Dorsolateral prefrontal cortex (tissue), 120 donors: ENCODE measurements at regions of chr6 and their contacts with region 1.

Region 1: GRCh38 chr6:98839781-98840361 is 5.5 kb downstream of the POU3F2 start:
- DNase-seq: peak in 7 of 10 donors; percentile 38 to 69 (median 56)
- H3K4me3 ChIP-seq: peak overlapping the region in 58 of 59 donors; percentile 27 to 92 (median 78)
- H3K27ac ChIP-seq: peak overlapping the region; percentile 24 to 99 (median 96)
- H3K27me3 ChIP-seq: peaks cover 0 to 61% (median 5%) of the 10 kb centered on the region in 45 donors
- CTCF ChIP-seq: peak; percentile 22 to 84 (median 67)

Region 2: DNA sequence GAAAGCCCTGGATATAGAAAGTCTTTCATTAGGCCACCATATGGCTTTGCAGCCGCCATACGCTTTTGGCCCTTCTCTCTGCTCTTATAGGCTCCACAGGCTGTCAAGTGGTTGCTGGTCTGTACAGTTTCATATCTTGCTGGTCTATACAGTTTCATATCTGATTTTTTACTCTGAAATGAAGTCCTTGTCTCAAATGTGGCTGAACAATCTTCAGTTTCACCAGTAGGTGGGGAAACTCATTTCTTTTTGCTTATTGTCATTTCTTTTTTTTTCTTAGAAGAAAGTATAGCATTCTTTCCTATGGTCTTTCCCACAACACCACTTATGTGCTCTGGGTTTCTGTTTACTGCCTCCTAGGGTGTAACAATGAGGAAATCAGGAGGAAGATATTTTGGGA is 785.4 kb before region 1 on chr6:
- intact Hi-C with region 1: loop called in 1 of 2 experiments (anchors 5 kb)
- DNase-seq: no peak
- H3K4me3 ChIP-seq: no peak overlapping the region
- H3K27ac ChIP-seq: no peak overlapping the region
- H3K27me3 ChIP-seq: no peaks in the 10 kb centered on the region
- CTCF ChIP-seq: peak in 53 of 56 donors; percentile 13 to 60 (median 39)

Region 3: DNA sequence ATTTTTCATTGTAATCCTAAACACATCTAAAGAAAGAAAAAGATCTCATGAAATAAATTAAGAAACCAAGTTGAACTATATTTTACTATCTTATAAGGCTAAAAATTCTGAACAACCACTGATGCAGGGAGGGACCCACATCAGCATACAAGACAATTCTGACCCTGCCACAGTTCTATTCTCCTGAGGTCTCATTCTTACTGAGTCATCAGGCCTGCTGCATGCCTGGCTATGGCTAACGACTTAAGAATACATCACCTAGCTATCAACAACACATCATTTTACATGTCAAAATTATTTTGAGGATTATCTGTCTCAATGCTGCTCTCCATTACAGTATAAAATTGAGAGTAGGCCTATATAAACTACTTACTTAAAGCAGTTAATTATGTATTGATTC is 54.9 kb after region 1 on chr6:
- intact Hi-C with region 1: no loop called
- DNase-seq: no peak
- H3K4me3 ChIP-seq: no peak overlapping the region
- H3K27ac ChIP-seq: no peak overlapping the region
- H3K27me3 ChIP-seq: no peaks in the 10 kb centered on the region
- CTCF ChIP-seq: no peak